Dendritic cell treated with granulocyte-macrophage colony-stimulating factor and Interleukin-4, amounts not matched to agents 40 ng/mL and 50 ng/mL, for 4 days (primary cell): ENCODE measurements at regions of chr2 and their contacts with region 1.

Region 1: DNA sequence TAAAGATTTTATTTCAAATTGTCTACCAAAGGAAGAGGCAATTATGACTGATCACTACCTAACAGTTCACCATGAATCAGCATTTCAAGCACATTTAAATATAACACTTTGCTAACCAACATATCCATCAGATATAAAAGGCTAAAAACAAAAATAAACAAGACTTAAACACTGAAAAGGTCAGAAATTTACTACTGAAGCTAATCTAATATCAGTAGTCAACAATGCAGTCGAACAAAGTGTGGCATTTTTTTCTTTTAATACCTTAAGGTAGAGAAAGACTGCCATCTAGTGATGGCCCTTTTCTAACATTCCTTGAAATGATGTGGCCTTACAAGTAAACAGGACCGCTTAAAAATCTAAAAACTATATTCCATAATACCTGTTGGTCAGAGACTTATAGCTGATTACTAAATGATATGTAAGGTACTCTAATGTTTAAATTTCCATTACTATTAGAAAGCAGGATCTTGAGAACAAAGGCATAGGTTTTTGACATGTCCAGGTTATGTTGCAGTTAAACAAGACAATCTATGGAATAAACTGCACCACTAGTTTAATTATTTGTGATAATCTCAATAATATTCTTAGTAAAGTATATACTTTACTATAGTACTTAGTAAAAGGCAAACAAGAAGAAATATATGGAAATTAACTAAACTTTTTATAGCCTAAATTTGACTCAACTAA is 80.0 kb downstream of the EXOC6B start:
- H3K4me3 Mint-ChIP-seq: no peak overlapping the region
- H3K27ac Mint-ChIP-seq: no peak overlapping the region
- H3K4me1 Mint-ChIP-seq: no peaks in the 10 kb centered on the region
- H3K27me3 Mint-ChIP-seq: no peaks in the 10 kb centered on the region

Region 2: GRCh38 chr2:71923887-71924533 is 821.8 kb before region 1 on chr2:
- intact Hi-C with region 1: loop called (anchors 1 kb)
- H3K4me3 Mint-ChIP-seq: no peak overlapping the region
- H3K27ac Mint-ChIP-seq: no peak overlapping the region
- H3K4me1 Mint-ChIP-seq: peaks cover 9% of the 10 kb centered on the region
- H3K27me3 Mint-ChIP-seq: no peaks in the 10 kb centered on the region

Region 3: DNA sequence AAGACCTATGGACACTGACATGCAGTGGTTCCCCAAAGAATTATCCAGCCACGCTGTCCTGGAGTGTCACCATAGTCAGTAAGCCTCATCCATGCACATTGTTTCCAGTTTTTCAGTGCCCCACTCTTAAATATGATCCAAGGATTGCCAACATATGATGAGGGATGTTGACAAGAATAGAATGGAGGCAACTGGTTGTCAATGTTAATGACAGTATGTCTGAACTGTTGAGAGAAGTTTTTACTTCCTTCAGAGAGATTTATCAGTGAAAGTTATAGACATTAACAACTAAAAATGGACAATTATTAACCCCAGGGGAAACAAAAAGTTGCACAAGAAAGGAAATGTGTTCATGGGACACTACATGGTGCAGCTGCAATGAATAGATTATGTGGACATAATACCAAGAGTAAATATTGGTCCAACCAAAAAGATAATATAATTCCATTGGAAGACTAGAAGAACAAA is 668.1 kb before region 1 on chr2:
- intact Hi-C with region 1: no loop called
- H3K4me3 Mint-ChIP-seq: no peak overlapping the region
- H3K27ac Mint-ChIP-seq: no peak overlapping the region
- H3K4me1 Mint-ChIP-seq: no peaks in the 10 kb centered on the region
- H3K27me3 Mint-ChIP-seq: no peaks in the 10 kb centered on the region

Region 4: DNA sequence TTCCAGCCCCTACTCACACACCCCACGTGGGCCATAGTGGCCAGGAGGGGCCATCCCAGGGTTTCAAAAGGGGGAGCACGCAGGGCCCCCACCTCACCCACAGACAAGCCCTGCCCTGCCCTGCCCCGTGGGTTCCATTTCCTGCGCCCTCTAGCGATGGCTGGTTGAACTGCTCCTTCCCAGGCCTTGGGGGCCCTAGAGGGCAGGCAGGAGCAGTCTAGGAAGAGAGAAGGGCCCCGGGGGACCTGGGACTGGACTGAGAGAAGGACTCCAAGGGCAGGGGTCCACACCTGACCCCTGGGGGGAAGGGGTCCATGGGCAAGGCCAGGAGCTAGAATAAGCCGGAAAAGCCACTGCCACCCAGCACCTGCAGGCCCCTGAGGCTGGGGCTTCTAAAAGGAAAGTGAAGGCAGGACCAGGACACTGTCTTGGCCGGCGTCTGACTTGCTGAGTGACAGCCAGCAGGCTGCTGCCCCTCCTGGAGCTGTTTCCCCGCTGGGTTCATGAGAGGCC is 608.3 kb before region 1 on chr2:
- intact Hi-C with region 1: loop called (anchors 10 kb)
- H3K4me3 Mint-ChIP-seq: no peak overlapping the region
- H3K27ac Mint-ChIP-seq: no peak overlapping the region
- H3K4me1 Mint-ChIP-seq: no peaks in the 10 kb centered on the region
- H3K27me3 Mint-ChIP-seq: peaks cover 18% of the 10 kb centered on the region

Region 5: GRCh38 chr2:72325592-72326422 is 420.0 kb before region 1 on chr2:
- intact Hi-C with region 1: loop called (anchors 10 kb)
- H3K4me3 Mint-ChIP-seq: no peak overlapping the region
- H3K27ac Mint-ChIP-seq: no peak overlapping the region
- H3K4me1 Mint-ChIP-seq: no peaks in the 10 kb centered on the region
- H3K27me3 Mint-ChIP-seq: no peaks in the 10 kb centered on the region

Region 6: GRCh38 chr2:72603481-72603880 is 142.3 kb before region 1 on chr2:
- intact Hi-C with region 1: loop called (anchors 10 kb)
- H3K4me3 Mint-ChIP-seq: no peak overlapping the region
- H3K27ac Mint-ChIP-seq: no peak overlapping the region
- H3K4me1 Mint-ChIP-seq: no peaks in the 10 kb centered on the region
- H3K27me3 Mint-ChIP-seq: no peaks in the 10 kb centered on the region